ENCODE measurements at regions of chr13 and their contacts with region 1.

Region 1: DNA sequence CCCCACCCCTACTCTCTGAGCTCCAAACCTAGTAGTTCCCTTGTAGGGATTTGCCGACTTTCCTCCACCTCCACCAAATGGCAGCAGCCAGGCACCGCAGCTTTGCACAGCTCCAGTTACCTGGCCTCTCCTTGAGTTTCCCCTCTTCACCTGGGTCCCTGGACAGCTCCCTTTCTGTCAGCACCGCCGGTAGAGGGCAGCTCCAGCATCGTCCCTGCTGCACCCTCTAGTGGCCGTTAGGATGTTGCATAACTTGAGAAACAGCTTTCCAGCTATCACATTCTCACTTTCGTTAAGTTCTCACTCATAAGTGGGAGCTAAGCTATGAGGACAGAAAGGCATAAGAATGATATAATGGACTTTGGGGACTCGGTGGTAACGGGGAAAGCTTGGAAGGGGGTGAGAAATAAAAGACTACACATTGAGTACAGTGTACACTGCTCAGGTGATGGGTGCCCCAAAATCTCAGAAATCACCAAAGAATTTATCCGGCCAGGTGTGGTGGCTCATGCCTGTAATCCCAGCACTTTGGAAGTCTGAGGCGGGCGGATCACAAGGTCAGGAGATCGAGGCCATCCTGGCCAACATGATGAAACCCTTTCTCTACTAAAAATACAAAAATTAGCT is 60.4 kb upstream of the OLFM4 start:
- DNase-seq: peak; percentile 76
- ATAC-seq: peak; percentile 93

Region 2: GRCh38 chr13:52617070-52618060 is 350.8 kb before region 1 on chr13:
- intact Hi-C with region 1: loop called (anchors 10 kb)
- DNase-seq: peak; percentile 83
- ATAC-seq: peak; percentile 96

Region 3: DNA sequence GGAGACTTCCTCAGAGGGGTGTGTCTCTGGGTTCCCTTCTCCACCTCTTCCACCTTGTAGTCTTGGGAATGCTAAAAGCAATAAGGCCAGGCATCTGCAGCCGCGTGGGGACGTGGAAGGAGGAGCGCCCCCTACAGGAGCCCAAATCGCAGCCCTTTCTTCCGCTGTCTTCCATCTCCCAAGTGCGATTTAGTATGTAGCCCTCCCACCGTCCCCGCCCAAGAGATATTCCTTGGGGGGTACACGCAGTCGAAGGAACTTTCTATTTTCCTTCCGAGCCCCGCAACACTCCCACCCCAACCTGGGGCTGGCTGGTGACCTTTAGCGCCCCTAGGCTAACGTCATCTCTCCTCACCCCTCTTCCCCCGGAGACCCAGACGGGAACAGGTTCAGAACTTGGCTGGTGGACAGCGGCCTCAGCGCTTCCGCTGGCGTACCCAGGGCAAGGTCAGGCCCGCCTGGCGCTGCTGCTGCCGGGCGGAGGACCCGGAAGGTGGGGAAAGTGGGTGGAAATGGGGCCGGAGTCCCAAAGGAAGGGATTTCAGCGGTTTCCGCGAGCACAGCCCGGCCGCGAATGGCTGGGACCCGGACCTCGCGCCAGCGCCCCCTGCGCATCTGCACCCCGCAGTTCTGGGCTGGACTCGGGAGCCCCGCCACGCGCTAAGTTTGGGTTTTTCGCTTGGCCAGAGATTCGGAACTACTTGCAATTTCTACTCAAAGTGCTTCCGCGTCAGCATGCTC is 117.6 kb before region 1 on chr13:
- intact Hi-C with region 1: loop called (anchors 10 kb)
- DNase-seq: peak; percentile 84
- ATAC-seq: peak; percentile 91

Region 4: DNA sequence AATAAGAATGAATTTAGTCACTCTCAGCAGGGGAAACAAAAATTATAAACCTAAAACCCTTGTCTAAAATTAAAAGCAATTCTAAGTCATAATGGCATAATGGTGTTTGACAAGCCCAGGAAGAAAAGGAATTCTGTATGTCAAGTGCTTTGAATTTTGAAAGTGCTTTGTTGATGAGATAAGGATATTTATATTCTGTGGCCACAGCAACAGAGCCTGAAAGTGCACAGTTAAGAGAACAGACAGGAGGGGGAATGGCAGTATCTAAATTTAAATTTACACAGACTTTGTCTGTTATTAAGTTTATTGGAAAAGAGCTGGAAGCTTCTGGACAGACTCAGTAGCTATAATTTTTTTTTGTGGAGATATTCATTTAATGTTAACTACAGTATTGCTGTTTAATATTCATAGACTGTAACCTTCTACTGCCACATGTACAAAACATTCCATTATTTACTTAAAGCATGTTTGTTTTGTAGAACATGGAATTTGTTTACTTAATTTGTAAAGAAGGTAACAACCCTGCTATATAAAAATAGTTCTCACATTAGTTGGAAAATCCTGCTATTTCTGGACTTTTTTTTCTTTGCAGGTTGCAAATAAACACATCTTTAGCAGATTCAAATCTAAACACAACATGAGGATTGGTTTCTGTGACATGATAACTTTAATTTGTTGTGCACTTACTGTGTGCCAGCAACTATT is 130.4 kb after region 1 on chr13:
- intact Hi-C with region 1: no loop called
- DNase-seq: no peak
- ATAC-seq: peak; percentile 31

Region 5: DNA sequence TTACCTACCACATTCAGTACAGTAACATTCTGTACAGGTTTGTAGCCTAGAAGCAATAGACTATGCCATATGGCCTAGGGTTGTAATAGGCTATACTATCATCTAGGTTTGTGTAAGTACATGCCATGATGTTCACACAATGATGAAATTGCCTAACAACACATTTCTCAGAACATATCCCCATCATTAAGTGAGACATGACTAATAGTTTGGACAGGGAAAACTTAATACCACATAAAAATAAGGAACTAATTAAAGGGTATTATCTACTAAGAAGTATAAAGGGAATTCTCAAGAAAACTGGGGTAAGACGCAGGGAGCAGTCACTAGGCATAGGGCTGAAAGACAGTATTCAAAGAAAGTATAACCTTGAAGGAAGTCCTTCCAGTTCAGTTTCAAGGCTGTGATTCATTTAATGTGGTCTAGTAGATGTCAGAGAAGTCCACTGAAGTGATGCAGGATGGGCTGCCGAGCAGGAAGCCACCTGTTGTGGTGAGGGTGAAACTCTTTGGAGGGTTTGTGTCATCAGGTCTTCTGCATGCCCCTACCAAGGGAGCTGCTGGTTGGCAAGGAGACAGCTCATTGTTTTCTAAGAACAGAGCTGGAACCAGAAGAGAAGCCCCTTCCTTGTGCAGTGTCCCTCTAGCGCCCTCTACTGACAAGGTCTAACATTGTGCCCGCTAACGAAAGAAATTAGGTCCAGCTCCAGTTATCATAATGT is 183.3 kb after region 1 on chr13:
- intact Hi-C with region 1: loop called (anchors 5 kb)
- DNase-seq: no peak
- ATAC-seq: peak; percentile 44

Measured in Right ventricle myocardium inferior (tissue), 1 donor.